HEK293 (cell line): ENCODE measurements at regions of chr14 and their contacts with region 1.

Region 1: DNA sequence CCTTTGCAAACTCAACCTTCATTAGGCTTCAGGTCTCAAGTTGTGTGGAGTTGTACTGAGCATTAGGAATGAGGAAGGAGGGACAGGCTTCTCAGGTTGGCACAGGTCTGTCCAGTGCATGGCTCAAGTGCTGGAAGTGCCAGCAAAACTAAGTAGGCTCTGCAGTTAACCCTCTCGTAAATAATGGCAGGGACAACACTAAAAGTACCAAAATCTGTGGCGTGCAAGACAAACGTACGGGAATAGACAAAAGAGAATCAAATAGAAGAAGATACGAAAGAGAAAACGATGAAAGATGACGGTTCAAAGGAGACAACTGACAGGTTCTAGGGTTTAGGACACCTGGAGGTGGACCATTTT is 612 bp downstream of the TRAPPC6B start:
- H3K4me3 ChIP-seq: peak overlapping the region; percentile 80
- H3K27ac ChIP-seq: peak overlapping the region; percentile 93
- H3K4me1 ChIP-seq: peaks cover 4% of the 10 kb centered on the region
- CTCF ChIP-seq: no peak

Region 2: DNA sequence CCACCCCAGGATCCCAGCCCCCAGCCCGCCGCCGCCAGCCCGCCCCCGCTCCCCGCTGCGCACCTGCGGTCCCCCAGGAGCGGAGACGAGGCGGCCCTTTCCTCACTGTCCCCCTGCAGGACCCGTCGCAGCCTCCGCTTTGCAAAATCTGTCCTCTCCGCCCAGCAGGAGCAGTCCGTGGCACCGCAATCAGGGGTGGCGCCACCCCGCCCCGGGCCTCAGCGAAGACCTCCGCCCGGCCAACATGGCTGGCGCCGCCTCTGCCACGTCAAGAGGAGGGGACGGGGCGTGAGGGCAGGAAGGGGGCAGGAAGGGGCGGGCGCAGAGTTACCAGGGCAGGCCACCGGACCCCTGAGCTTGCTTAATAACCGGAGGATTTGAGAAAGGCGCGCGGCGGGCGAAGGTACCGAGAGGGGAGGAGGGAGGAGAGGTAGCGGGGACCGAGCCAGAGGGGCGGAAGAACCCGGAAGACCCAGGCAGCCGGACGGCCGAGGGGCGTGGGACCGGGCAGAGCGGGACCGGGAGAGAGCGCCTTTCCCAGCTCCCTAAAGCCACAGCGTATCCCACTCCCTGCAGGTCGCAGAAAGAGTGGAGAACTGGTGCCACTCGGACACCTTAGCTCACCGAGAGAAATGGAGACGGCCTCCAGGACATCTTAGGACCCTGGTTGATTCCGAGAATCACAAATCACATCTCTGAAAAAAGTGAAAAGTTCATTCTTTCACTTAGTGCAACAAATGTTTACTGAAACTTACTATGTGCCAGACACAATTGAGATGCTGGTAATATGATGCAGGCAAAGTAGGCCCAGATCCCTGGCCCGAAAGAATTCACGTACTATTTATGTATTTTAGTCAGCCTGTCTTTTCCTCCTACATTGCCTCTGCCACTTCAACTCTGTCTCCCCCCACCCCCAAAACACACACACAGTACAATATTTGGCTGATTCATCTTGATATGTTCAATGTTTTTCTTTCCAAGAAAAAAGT is 66.3 kb before region 1 on chr14 and contains the start of gene SEC23A:
- CTCF ChIA-PET with region 1: interaction called, 3 read pairs
- POLR2A ChIA-PET with region 1: interaction called, 34 read pairs
- H3K4me3 ChIP-seq: peak within 1 kb of the TSS; percentile 93
- H3K27ac ChIP-seq: peak within 1 kb of the TSS; percentile 77
- H3K4me1 ChIP-seq: no peaks in the 10 kb centered on the region
- CTCF ChIP-seq: peak; percentile 76

Region 3: GRCh38 chr14:39145266-39145966 is 24.1 kb before region 1 on chr14:
- CTCF ChIA-PET with region 1: interaction called, 3 read pairs
- POLR2A ChIA-PET with region 1: interaction called, 16 read pairs
- H3K4me3 ChIP-seq: no peak overlapping the region
- H3K27ac ChIP-seq: no peak overlapping the region
- H3K4me1 ChIP-seq: no peaks in the 10 kb centered on the region
- CTCF ChIP-seq: no peak

Region 4: DNA sequence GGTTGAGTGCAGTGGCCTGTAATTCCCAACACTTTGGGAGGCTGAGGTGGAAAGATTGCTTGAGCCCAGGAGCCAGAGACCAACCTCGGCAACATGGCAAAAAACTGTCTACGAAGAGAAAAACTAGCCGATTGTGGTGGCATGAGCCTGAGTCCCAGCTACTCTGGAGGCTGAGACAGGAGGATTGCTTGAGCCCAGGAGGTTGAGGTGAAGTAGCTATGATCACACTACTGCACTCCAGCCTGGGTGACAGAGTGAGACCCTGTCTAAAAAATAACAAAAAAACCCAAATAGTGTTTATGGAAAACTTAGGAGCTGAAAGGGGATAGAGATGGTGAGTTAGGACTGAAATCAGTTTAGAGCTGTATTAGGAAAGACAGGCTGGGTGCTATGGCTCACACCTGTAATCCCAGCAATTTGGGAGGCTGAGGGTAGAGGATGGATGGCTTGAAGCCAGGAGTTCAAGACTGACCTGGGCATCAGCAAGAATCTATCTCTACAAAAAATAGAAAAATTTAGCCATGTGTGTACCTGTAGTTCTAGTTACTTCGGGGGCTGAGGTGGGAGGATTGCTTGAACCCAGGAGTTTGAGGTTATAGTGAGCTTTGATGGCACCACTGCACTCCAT is 15.2 kb after region 1 on chr14:
- CTCF ChIA-PET with region 1: no interaction called
- POLR2A ChIA-PET with region 1: interaction called, 15 read pairs
- H3K4me3 ChIP-seq: no peak overlapping the region
- H3K27ac ChIP-seq: no peak overlapping the region
- H3K4me1 ChIP-seq: no peaks in the 10 kb centered on the region
- CTCF ChIP-seq: no peak

Region 5: GRCh38 chr14:39432179-39432618 is 262.7 kb after region 1 on chr14 and contains the start of gene FBXO33:
- CTCF ChIA-PET with region 1: no interaction called
- POLR2A ChIA-PET with region 1: interaction called, 23 read pairs
- H3K4me3 ChIP-seq: peak within 1 kb of the TSS; percentile 87
- H3K27ac ChIP-seq: peak within 1 kb of the TSS; percentile 100
- H3K4me1 ChIP-seq: peaks cover 4% of the 10 kb centered on the region; the same call in 1 of the 2 replicates
- CTCF ChIP-seq: no peak